ENCODE measurements at regions of chr5 and their contacts with region 1.

Region 1: DNA sequence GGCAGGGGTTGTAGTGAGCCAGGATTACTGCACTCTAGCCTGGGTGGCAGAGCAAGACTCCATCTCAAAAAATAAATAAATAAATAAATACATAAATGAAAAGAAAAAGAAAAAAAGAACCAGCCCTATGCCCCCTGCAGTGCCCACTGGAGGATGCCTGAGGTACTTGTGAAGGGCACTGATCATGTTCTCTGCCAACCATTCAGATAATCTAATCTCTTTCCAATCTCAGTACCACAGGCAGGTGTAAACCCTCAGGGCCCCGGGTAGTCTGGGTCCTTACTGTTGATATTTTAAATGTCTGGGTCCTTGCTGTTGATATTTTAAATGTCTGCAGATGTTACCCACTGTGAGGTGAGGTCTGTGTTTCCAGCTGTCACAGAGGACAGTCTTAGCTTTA is 321.8 kb upstream of the ADCY2 start:
- DNase-seq: no peak
- H3K4me3 ChIP-seq: no peak overlapping the region
- H3K27ac ChIP-seq: no peak overlapping the region
- H3K4me1 ChIP-seq: no peaks in the 10 kb centered on the region
- H3K27me3 ChIP-seq: no peaks in the 10 kb centered on the region
- CTCF ChIP-seq: no peak
- POLR2A ChIP-seq: no peak

Region 2: DNA sequence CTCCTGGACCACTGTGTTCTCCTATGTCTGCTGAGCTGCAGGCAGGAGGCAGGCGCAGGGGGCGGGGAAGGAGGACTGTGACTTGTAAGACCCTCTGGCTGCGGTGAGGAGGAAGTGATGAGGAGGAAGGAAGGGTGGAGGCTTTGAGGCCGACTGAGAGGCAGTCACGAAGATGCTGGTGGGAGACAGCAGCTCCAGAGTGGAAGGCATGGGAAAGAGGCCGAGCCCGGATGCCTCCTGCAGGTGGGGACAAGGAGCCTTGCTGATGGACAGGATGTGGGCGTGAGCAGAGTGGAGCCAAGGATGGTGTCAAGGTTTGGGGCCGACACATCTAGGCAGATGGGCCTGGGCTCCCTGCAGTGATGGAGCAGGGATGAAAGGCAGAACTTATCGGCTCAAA is 1726.0 kb before region 1 on chr5:
- intact Hi-C with region 1: loop called (anchors 5 kb)
- DNase-seq: no peak
- H3K4me3 ChIP-seq: no peak overlapping the region
- H3K27ac ChIP-seq: no peak overlapping the region
- H3K4me1 ChIP-seq: no peaks in the 10 kb centered on the region
- H3K27me3 ChIP-seq: no peaks in the 10 kb centered on the region
- CTCF ChIP-seq: no peak
- POLR2A ChIP-seq: no peak

Measured in breast epithelium (tissue), 4 donors.